Activated CD4-positive, alpha-beta T cell treated with anti-CD3 and anti-CD28 coated beads for 36 hours (primary cell): ENCODE measurements at regions of chr2 and their contacts with region 1.

Region 1: DNA sequence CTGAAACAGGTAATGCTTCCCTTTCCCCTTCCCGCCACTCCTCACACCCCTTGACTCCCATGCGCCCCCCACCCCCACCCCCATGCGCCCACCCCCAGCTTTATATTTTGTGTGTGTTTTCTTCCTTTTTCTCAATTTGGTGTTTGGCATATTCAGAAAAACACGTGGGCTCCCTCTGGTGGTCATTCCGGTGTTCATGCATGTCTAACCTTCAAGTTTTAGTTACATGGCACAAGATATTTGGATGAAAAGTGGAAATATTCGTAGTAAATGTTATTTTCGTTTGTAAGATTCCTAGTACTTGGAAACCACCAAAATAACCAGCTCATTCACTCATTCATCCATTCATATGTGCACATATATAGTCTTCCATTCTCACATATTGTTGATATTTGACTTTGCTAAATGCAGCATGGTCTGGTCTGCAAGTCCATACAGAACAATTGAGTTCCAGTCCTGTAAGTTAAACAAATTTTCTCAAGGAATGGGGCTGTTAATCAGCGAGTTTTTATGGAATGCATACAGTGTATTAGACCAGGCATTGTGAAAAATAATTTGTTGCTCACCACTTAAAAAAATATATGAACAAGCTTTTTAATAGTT is 143.6 kb upstream of the MAP3K20 start:
- DNase-seq: peak; percentile 82
- ATAC-seq: peak; percentile 55
- H3K4me3 Mint-ChIP-seq: no peak overlapping the region
- H3K27ac Mint-ChIP-seq: no peak overlapping the region
- H3K4me1 Mint-ChIP-seq: peaks cover 5% of the 10 kb centered on the region
- H3K27me3 Mint-ChIP-seq: peaks cover 6% of the 10 kb centered on the region

Region 2: GRCh38 chr2:171966268-171966667 is 965.8 kb before region 1 on chr2:
- CTCF ChIA-PET with region 1: no interaction called
- POLR2A ChIA-PET with region 1: no interaction called
- intact Hi-C with region 1: no loop called
- DNase-seq: no peak
- ATAC-seq: no peak
- H3K4me3 Mint-ChIP-seq: no peak overlapping the region
- H3K27ac Mint-ChIP-seq: no peak overlapping the region
- H3K4me1 Mint-ChIP-seq: peaks cover 16% of the 10 kb centered on the region
- H3K27me3 Mint-ChIP-seq: no peaks in the 10 kb centered on the region

Region 3: GRCh38 chr2:172623249-172623965 is 308.6 kb before region 1 on chr2:
- CTCF ChIA-PET with region 1: no interaction called
- POLR2A ChIA-PET with region 1: no interaction called
- intact Hi-C with region 1: no loop called
- DNase-seq: no peak
- ATAC-seq: no peak
- H3K4me3 Mint-ChIP-seq: no peak overlapping the region
- H3K27ac Mint-ChIP-seq: no peak overlapping the region
- H3K4me1 Mint-ChIP-seq: no peaks in the 10 kb centered on the region
- H3K27me3 Mint-ChIP-seq: no peaks in the 10 kb centered on the region

Region 4: GRCh38 chr2:172806493-172806892 is 125.5 kb before region 1 on chr2:
- CTCF ChIA-PET with region 1: interaction called, 65 read pairs
- POLR2A ChIA-PET with region 1: no interaction called
- intact Hi-C with region 1: loop called (anchors 1 kb)
- DNase-seq: no peak
- ATAC-seq: no peak
- H3K4me3 Mint-ChIP-seq: no peak overlapping the region
- H3K27ac Mint-ChIP-seq: no peak overlapping the region
- H3K4me1 Mint-ChIP-seq: no peaks in the 10 kb centered on the region
- H3K27me3 Mint-ChIP-seq: peaks cover 3% of the 10 kb centered on the region

Region 5: GRCh38 chr2:172836386-172836821 is 95.6 kb before region 1 on chr2:
- CTCF ChIA-PET with region 1: no interaction called
- POLR2A ChIA-PET with region 1: no interaction called
- intact Hi-C with region 1: no loop called
- DNase-seq: no peak
- ATAC-seq: peak; percentile 57
- H3K4me3 Mint-ChIP-seq: no peak overlapping the region
- H3K27ac Mint-ChIP-seq: no peak overlapping the region
- H3K4me1 Mint-ChIP-seq: peaks cover 5% of the 10 kb centered on the region
- H3K27me3 Mint-ChIP-seq: peaks cover 12% of the 10 kb centered on the region

Region 6: GRCh38 chr2:172869861-172870260 is 62.2 kb before region 1 on chr2:
- CTCF ChIA-PET with region 1: interaction called, 63 read pairs
- POLR2A ChIA-PET with region 1: no interaction called
- intact Hi-C with region 1: no loop called
- DNase-seq: no peak
- ATAC-seq: no peak
- H3K4me3 Mint-ChIP-seq: no peak overlapping the region
- H3K27ac Mint-ChIP-seq: no peak overlapping the region
- H3K4me1 Mint-ChIP-seq: no peaks in the 10 kb centered on the region
- H3K27me3 Mint-ChIP-seq: peaks cover 2% of the 10 kb centered on the region

Region 7: DNA sequence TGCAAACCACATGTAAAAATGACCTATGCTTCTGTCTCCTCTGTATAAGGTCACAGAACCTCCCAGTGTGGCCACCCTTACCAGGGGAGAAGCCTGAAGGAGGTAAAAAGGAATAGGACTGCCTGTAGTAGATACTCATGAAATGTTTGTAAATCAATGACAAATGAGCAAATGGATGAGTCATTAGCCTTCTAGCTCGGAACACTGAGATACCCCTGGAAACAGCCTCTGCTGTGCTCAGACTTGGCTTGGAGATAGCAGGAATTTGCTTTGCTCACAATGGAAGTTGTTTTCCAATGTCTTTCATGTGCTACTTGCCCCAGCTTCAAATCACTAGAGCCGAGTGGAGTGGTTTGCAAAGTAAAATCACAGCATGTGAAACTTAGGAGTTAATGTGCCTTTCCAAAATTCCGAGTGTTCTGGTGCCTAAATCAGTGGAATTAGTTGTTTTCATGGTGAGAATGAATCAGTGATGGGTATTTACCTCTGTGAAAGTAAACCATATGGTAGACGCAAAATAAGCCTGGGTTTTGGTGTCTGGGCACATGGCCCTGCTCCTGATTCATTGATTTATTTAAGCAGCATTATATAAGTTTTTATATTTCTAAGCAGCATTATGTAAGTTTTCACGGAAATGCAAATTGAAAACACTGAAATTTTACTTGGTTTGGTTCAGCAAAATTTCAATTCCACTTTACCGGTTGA is 10.3 kb before region 1 on chr2:
- CTCF ChIA-PET with region 1: interaction called, 44 read pairs
- POLR2A ChIA-PET with region 1: no interaction called
- intact Hi-C with region 1: no loop called
- DNase-seq: no peak
- ATAC-seq: no peak
- H3K4me3 Mint-ChIP-seq: no peak overlapping the region
- H3K27ac Mint-ChIP-seq: no peak overlapping the region
- H3K4me1 Mint-ChIP-seq: no peaks in the 10 kb centered on the region
- H3K27me3 Mint-ChIP-seq: peaks cover 2% of the 10 kb centered on the region

Region 8: GRCh38 chr2:172972005-172972619 is 40.1 kb after region 1 on chr2:
- CTCF ChIA-PET with region 1: interaction called, 10 read pairs
- POLR2A ChIA-PET with region 1: no interaction called
- intact Hi-C with region 1: no loop called
- DNase-seq: peak; percentile 71
- ATAC-seq: peak; percentile 73
- H3K4me3 Mint-ChIP-seq: no peak overlapping the region
- H3K27ac Mint-ChIP-seq: no peak overlapping the region
- H3K4me1 Mint-ChIP-seq: peaks cover 34% of the 10 kb centered on the region
- H3K27me3 Mint-ChIP-seq: no peaks in the 10 kb centered on the region

Region 9: GRCh38 chr2:174051741-174052583 is 1119.9 kb after region 1 on chr2:
- CTCF ChIA-PET with region 1: no interaction called
- POLR2A ChIA-PET with region 1: no interaction called
- intact Hi-C with region 1: no loop called
- DNase-seq: no peak
- ATAC-seq: no peak
- H3K4me3 Mint-ChIP-seq: no peak overlapping the region
- H3K27ac Mint-ChIP-seq: no peak overlapping the region
- H3K4me1 Mint-ChIP-seq: no peaks in the 10 kb centered on the region
- H3K27me3 Mint-ChIP-seq: peaks cover 2% of the 10 kb centered on the region